Mammary epithelial cell (primary cell): ENCODE measurements at regions of chr14 and their contacts with region 1.

Region 1: DNA sequence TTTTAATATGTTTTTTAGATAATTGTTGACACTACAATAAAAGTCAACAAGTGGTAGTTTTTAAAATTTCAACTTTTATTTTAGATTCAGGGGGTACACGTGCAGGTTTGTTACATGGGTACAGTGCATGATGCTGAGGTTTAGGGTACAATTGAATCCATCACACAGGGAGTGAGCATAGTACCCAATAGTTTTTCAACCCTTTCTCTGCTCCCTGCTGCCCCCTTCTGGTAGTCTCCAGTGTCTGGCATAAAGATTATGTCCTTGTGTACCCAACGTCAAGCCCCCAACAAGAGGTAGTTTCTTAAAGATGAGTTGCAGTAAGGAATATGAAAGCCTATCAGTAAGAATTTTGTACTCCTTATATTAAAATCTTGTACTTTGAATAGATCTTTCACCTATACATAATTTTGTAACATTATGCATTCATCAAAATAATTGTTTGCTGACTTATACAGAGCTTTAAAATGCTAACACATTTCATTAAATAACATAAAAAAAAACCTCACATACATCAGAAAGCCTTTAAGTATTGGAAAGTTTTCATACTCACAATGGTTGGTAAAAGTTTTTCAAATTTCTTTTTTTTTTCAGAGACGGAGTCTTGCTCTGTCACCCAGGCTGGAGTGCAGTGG is 5.4 kb upstream of the RALGAPA1 start:
- DNase-seq: peak; percentile 23
- H3K4me3 ChIP-seq: no peak overlapping the region
- H3K27ac ChIP-seq: no peak overlapping the region
- H3K4me1 ChIP-seq: peaks cover under 1% of the 10 kb centered on the region
- H3K27me3 ChIP-seq: no peaks in the 10 kb centered on the region
- CTCF ChIP-seq: peak; percentile 76 to 88

Region 2: GRCh38 chr14:35068238-35069012 is 746.1 kb before region 1 on chr14:
- CTCF ChIA-PET with region 1: no interaction called
- dilution Hi-C with region 1: no loop called
- in situ Hi-C with region 1: no loop called
- intact Hi-C with region 1: no loop called
- DNase-seq: peak; percentile 20
- H3K4me3 ChIP-seq: no peak overlapping the region
- H3K27ac ChIP-seq: no peak overlapping the region
- H3K4me1 ChIP-seq: no peaks in the 10 kb centered on the region
- H3K27me3 ChIP-seq: no peaks in the 10 kb centered on the region
- CTCF ChIP-seq: no peak

Region 3: DNA sequence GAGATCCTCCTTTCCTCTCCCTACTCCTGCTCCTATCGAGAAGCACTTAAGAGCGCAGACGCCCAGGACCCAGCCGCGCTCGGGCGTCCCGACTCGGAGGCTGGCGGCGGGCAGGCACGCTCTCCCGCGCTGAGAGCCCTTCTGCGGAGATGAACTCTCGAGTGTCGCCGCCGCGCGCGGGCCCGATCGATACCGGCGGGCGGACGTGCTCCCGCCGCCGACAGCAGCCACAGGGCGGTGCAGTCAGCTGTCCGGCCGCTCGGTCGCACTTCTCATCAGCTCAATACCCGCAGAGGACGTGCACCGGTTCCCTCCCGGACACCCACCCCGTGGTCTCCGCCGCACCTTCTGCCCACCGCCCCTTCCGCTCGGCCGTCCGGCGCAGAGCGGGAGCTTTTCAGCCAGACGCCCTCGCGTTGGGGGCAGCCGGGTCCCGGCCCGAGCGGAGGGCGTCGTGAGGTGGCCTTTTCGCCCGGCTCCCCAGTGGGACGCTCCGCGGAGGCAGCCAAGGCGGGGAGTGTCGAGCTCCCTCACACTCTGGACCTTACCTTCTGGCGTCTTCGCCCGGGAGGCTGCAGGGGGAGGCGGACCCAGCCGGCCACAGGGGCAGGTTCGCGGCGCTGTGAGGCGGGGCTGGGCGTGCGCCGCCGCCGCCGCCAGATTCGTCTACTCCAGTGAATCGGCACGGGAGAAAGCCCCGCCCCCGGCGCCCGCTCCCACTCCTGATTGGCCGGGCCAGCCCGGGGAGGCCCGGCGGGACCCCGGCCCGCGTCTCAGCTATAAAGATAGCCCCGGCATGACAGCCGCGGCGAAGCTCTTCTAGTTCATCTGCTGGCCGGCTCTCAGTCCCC is 280.9 kb before region 1 on chr14 and contains the start of gene INSM2:
- CTCF ChIA-PET with region 1: no interaction called
- dilution Hi-C with region 1: no loop called
- in situ Hi-C with region 1: no loop called
- intact Hi-C with region 1: loop called (anchors 5 kb)
- DNase-seq: peak; percentile 63
- H3K4me3 ChIP-seq: peak within 1 kb of the TSS; percentile 61 to 71 (median 64)
- H3K27ac ChIP-seq: no peak within 1 kb of the TSS
- H3K4me1 ChIP-seq: peaks cover 22% of the 10 kb centered on the region
- H3K27me3 ChIP-seq: peaks cover 21% of the 10 kb centered on the region
- CTCF ChIP-seq: peak in 1 of 2 donors; percentile 10
- total RNA-seq, gene INSM2: not detected

Region 4: GRCh38 chr14:35727764-35728163 is 86.7 kb before region 1 on chr14:
- CTCF ChIA-PET with region 1: interaction called, 10 read pairs
- dilution Hi-C with region 1: no loop called
- in situ Hi-C with region 1: no loop called
- intact Hi-C with region 1: no loop called
- DNase-seq: no peak
- H3K4me3 ChIP-seq: no peak overlapping the region
- H3K27ac ChIP-seq: no peak overlapping the region
- H3K4me1 ChIP-seq: no peaks in the 10 kb centered on the region
- H3K27me3 ChIP-seq: no peaks in the 10 kb centered on the region
- CTCF ChIP-seq: no peak

Region 5: GRCh38 chr14:36085861-36086260 is 271.4 kb after region 1 on chr14:
- CTCF ChIA-PET with region 1: no interaction called
- dilution Hi-C with region 1: no loop called
- in situ Hi-C with region 1: no loop called
- intact Hi-C with region 1: no loop called
- DNase-seq: no peak
- H3K4me3 ChIP-seq: no peak overlapping the region
- H3K27ac ChIP-seq: no peak overlapping the region
- H3K4me1 ChIP-seq: peaks cover under 1% of the 10 kb centered on the region
- H3K27me3 ChIP-seq: peaks cover 2% of the 10 kb centered on the region
- CTCF ChIP-seq: no peak